Uterus (tissue), 4 donors: ENCODE measurements at regions of chr7 and their contacts with region 1.

Region 1: GRCh38 chr7:155344600-155345433 is 47.1 kb downstream of the INSIG1 start:
- DNase-seq: peak; percentile 66 to 81
- H3K4me3 ChIP-seq: peak overlapping the region in 1 of 2 donors; percentile 29
- H3K27ac ChIP-seq: no peak overlapping the region
- H3K4me1 ChIP-seq: peaks cover 0 to 5% of the 10 kb centered on the region in 2 donors
- H3K27me3 ChIP-seq: no peaks in the 10 kb centered on the region
- CTCF ChIP-seq: peak; percentile 69 to 98 (median 90)
- POLR2A ChIP-seq: no peak

Region 2: GRCh38 chr7:154750353-154750801 is 594.4 kb before region 1 on chr7:
- intact Hi-C with region 1: no loop called
- DNase-seq: no peak
- H3K4me3 ChIP-seq: no peak overlapping the region
- H3K27ac ChIP-seq: no peak overlapping the region
- H3K4me1 ChIP-seq: no peaks in the 10 kb centered on the region
- H3K27me3 ChIP-seq: no peaks in the 10 kb centered on the region
- CTCF ChIP-seq: no peak
- POLR2A ChIP-seq: no peak

Region 3: DNA sequence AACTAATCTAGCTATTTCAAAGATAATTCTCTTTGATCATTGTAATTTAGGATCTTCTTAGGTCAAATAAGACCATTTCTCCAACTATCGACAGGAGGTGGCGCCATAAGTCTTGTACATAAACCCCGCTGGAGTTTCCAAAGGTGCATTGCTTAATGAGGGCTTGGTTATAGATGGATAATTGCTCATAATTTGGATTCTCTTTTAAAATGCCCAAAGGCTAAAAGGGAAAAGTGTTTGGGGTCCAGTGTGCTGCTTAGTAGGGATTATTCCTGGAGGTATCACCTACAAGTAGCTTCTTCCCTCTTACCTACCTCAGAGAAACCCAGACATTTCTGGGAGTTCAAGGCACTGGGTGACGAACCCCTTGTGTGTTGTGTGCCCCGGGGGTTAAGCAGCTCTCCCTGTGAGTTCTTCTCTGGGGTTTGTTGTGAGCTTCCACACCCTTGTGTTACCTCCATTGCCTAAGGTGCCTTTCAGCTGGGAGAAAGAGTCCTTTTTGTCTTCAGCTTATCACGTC is 417.1 kb before region 1 on chr7:
- intact Hi-C with region 1: loop called (anchors 10 kb)
- DNase-seq: peak; percentile 69 to 90
- H3K4me3 ChIP-seq: peak overlapping the region; percentile 53 to 64
- H3K27ac ChIP-seq: peak overlapping the region; percentile 86 to 95
- H3K4me1 ChIP-seq: peaks cover 0 to 4% of the 10 kb centered on the region in 2 donors
- H3K27me3 ChIP-seq: no peaks in the 10 kb centered on the region
- CTCF ChIP-seq: peak; percentile 64 to 79 (median 71)
- POLR2A ChIP-seq: no peak

Region 4: GRCh38 chr7:155190688-155191087 is 154.1 kb before region 1 on chr7:
- intact Hi-C with region 1: loop called (anchors 10 kb)
- DNase-seq: peak in 1 of 2 donors; percentile 49
- H3K4me3 ChIP-seq: no peak overlapping the region
- H3K27ac ChIP-seq: no peak overlapping the region
- H3K4me1 ChIP-seq: no peaks in the 10 kb centered on the region
- H3K27me3 ChIP-seq: no peaks in the 10 kb centered on the region
- CTCF ChIP-seq: peak; percentile 70 to 88 (median 80)
- POLR2A ChIP-seq: no peak

Region 5: DNA sequence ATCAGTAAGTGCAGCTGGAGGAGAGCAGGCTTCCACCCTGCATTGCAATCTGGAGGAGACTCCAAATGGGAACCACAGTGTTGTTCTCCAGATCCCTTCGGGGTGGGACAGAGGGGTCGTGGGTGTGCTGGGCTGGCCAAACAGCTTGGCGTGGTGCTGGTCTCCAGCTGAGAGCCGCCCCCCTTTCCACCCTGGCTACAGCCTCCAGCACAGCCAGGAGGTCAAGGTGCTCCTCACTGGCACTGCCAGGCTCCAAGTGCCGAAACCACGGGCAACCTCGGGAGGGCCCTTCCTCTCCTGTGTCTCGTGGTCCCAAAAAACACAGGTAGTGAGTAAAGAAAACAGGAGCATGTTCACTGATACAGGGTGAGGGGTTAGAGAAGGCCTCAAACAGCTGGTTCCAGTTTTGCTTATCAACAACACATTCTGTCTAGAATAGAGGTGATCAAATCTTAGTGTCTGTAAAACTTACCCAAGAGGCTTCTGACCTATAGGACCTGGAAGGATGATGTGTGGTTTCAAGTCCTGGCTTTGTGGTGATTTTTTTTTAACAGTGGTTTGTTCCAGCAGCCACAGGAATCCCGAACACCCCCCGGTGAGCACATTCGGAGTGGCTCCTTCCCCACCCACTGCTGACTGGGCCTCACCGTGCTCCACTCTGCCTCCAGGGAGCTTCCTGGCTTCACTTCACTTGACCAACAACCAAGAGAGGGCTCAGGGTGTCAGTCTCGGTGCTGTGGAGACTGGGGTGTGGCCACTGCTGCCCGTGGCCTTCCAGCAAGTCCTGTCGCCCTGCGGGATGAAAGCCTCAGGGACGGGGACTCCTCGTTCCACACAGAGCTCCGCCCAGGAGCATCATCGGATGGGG is 82.0 kb after region 1 on chr7:
- intact Hi-C with region 1: no loop called
- DNase-seq: no peak
- H3K4me3 ChIP-seq: no peak overlapping the region
- H3K27ac ChIP-seq: no peak overlapping the region
- H3K4me1 ChIP-seq: no peaks in the 10 kb centered on the region
- H3K27me3 ChIP-seq: no peaks in the 10 kb centered on the region
- CTCF ChIP-seq: no peak
- POLR2A ChIP-seq: no peak